Heart right ventricle (tissue), 16 donors: ENCODE measurements at regions of chr5 and their contacts with region 1.

Region 1: DNA sequence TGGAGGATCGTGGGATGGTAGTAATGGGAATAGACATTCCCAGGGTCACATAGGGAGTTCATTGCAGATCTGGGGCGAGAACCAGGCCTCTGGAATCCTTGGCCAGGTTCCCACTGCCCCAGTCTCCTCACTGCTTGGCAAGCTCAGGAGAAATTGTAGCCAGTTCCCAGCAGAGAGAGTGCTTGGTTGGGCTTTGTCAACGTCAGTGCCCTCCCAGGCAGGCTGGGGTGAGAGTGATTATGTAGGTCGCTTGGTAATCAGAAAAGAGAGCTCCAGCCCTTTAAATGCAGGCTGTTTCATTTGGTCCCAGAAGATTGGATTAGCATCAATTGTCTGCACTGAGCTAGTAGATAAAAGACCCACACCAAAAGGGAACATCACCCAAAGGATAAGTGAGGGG is 51.8 kb upstream of the GALNT10 start:
- DNase-seq: peak; percentile 62 to 74
- ATAC-seq: peak; percentile 81 to 96 (median 91)
- H3K4me3 ChIP-seq: no peak overlapping the region
- H3K27ac ChIP-seq: peak overlapping the region; percentile 11 to 85 (median 56)
- H3K4me1 ChIP-seq: peaks cover 6 to 59% (median 29%) of the 10 kb centered on the region in 9 donors
- H3K27me3 ChIP-seq: no peaks in the 10 kb centered on the region
- CTCF ChIP-seq: no peak

Region 2: GRCh38 chr5:154087257-154087656 is 51.4 kb before region 1 on chr5:
- intact Hi-C with region 1: loop called in 1 of 10 experiments (anchors 10 kb)
- DNase-seq: no peak
- ATAC-seq: peak in 3 of 8 donors; percentile 16 to 37 (median 18)
- H3K4me3 ChIP-seq: no peak overlapping the region
- H3K27ac ChIP-seq: peak overlapping the region in 4 of 10 donors; percentile 9 to 51 (median 36)
- H3K4me1 ChIP-seq: peaks cover 0 to 39% (median 27%) of the 10 kb centered on the region in 9 donors
- H3K27me3 ChIP-seq: no peaks in the 10 kb centered on the region
- CTCF ChIP-seq: peak in 1 of 9 donors; percentile 13

Region 3: GRCh38 chr5:154103233-154103632 is 35.5 kb before region 1 on chr5:
- intact Hi-C with region 1: loop called in 1 of 10 experiments (anchors 5 kb)
- DNase-seq: no peak
- ATAC-seq: peak in 5 of 8 donors; percentile 40 to 87 (median 56)
- H3K4me3 ChIP-seq: no peak overlapping the region
- H3K27ac ChIP-seq: no peak overlapping the region
- H3K4me1 ChIP-seq: peaks cover 0 to 32% (median 7%) of the 10 kb centered on the region in 9 donors
- H3K27me3 ChIP-seq: no peaks in the 10 kb centered on the region
- CTCF ChIP-seq: no peak

Region 4: GRCh38 chr5:154202379-154203260 is 63.9 kb after region 1 on chr5:
- intact Hi-C with region 1: no loop called
- DNase-seq: no peak
- ATAC-seq: peak in 7 of 8 donors; percentile 37 to 71 (median 46)
- H3K4me3 ChIP-seq: no peak overlapping the region
- H3K27ac ChIP-seq: peak overlapping the region in 2 of 10 donors; percentile 24 to 56
- H3K4me1 ChIP-seq: peaks cover 0 to 39% (median 25%) of the 10 kb centered on the region in 9 donors
- H3K27me3 ChIP-seq: no peaks in the 10 kb centered on the region
- CTCF ChIP-seq: no peak